Dendritic cell treated with granulocyte-macrophage colony-stimulating factor and Interleukin-4, amounts not matched to agents 40 ng/mL and 50 ng/mL, for 4 days (primary cell): ENCODE measurements at regions of chr15 and their contacts with region 1.

Region 1: GRCh38 chr15:62035256-62035908 is 24.9 kb downstream of the VPS13C start:
- H3K4me3 Mint-ChIP-seq: no peak overlapping the region
- H3K27ac Mint-ChIP-seq: no peak overlapping the region
- H3K4me1 Mint-ChIP-seq: no peaks in the 10 kb centered on the region
- H3K27me3 Mint-ChIP-seq: no peaks in the 10 kb centered on the region

Region 2: GRCh38 chr15:61794276-61794675 is 241.1 kb before region 1 on chr15:
- intact Hi-C with region 1: no loop called
- H3K4me3 Mint-ChIP-seq: no peak overlapping the region
- H3K27ac Mint-ChIP-seq: no peak overlapping the region
- H3K4me1 Mint-ChIP-seq: no peaks in the 10 kb centered on the region
- H3K27me3 Mint-ChIP-seq: no peaks in the 10 kb centered on the region

Region 3: DNA sequence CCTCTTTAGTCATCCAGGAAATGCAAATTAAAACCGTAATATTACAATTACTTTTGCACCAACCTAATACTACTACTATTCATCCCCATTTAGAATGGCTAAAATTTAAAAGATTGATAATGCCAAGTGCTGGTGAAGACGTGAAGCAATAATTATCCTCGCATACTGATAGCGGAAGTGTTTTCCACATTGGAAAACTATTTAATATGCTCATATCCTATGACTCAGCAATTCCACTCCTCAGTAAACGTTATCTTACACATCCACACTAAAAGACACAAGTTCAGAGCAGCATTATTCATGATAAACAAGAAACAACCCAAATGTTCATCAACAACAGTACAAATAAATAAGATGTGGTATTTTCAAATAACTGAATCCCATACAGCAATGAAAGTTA is 45.7 kb before region 1 on chr15:
- intact Hi-C with region 1: loop called (anchors 10 kb)
- H3K4me3 Mint-ChIP-seq: no peak overlapping the region
- H3K27ac Mint-ChIP-seq: no peak overlapping the region
- H3K4me1 Mint-ChIP-seq: no peaks in the 10 kb centered on the region
- H3K27me3 Mint-ChIP-seq: no peaks in the 10 kb centered on the region